Activated CD8-positive, alpha-beta T cell treated with anti-CD3 and anti-CD28 coated beads, Interleukin-2, amount 10 ng/mL, durations not matched to agents 7 days and 5 days (primary cell): ENCODE measurements at regions of chr20 and their contacts with region 1.

Region 1: GRCh38 chr20:16821211-16822089 is 73.3 kb downstream of the OTOR start:
- DNase-seq: peak; percentile 47
- ATAC-seq: no peak
- H3K4me3 Mint-ChIP-seq: no peak overlapping the region
- H3K27ac Mint-ChIP-seq: no peak overlapping the region
- H3K4me1 Mint-ChIP-seq: no peaks in the 10 kb centered on the region
- H3K27me3 Mint-ChIP-seq: peaks cover 12% of the 10 kb centered on the region

Region 2: GRCh38 chr20:16407251-16408067 is 414.0 kb before region 1 on chr20:
- CTCF ChIA-PET with region 1: no interaction called
- POLR2A ChIA-PET with region 1: no interaction called
- DNase-seq: no peak
- ATAC-seq: no peak
- H3K4me3 Mint-ChIP-seq: no peak overlapping the region
- H3K27ac Mint-ChIP-seq: no peak overlapping the region
- H3K4me1 Mint-ChIP-seq: no peaks in the 10 kb centered on the region
- H3K27me3 Mint-ChIP-seq: no peaks in the 10 kb centered on the region

Region 3: DNA sequence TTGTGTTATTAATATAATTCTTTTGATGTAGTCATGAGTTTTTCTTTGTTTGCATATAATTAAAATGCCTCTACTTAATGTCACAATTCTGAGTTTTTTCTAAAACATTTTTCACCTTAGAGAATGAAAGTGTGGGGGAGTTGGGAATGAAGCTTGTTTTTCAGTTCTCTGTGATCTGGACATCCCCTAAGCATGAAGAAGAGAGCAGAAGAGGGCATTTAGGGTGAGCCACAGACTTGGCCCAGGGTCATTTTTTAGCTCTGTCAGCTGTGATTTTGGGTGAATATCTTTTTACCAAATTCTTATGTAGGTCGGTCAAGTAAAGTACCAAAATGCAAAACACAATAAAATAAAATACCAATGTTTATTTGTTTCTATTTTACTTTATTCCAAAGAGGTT is 69.4 kb before region 1 on chr20:
- CTCF ChIA-PET with region 1: no interaction called
- POLR2A ChIA-PET with region 1: no interaction called
- DNase-seq: no peak
- ATAC-seq: no peak
- H3K4me3 Mint-ChIP-seq: no peak overlapping the region
- H3K27ac Mint-ChIP-seq: no peak overlapping the region
- H3K4me1 Mint-ChIP-seq: no peaks in the 10 kb centered on the region
- H3K27me3 Mint-ChIP-seq: peaks cover 6% of the 10 kb centered on the region

Region 4: DNA sequence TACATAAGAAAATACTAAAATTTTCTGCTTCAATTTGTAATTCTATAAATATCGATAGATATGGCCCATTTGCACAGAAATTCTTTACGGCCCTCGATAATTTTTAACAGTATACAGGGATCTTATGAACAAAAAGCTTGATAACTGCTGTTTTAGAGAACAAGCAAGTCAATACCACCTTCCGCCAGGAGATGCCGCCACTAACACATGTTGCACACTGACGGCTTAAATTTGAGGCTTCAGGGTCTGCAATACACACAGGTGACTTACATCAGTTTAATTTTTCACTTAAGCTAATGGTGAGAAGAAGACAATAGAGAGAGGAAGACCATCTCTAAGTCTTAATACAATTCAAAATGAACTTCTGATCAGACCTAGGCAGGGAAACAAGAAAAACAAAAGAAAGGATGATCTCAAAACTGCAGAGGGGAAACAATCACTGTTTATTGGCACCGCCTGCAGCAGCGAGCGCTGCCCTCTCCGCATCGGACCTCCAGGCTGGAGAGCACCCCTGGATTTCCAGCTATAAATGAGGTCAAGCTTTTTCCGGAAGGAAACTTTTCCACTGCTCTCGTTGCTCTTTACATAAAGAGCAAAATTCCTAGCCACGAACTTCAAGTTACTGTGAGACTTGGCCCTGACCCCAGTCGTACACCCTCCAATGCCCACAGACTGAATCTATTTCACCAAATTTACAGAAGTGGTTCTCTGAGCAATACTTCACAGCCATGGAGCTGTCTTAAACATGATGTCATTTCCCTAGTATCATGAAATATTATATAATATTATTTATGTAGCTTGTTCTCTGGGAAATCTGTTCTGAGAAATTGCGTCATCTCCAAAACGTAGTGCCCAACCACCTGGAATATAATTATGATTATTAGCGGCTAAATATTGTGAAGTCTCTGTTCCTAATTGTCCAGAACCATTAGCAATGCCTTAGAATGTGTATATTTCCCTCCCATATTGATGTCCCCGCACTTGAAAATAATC is 19.2 kb before region 1 on chr20:
- CTCF ChIA-PET with region 1: interaction called, 35 read pairs
- POLR2A ChIA-PET with region 1: no interaction called
- DNase-seq: peak; percentile 71
- ATAC-seq: peak; percentile 44
- H3K4me3 Mint-ChIP-seq: no peak overlapping the region
- H3K27ac Mint-ChIP-seq: no peak overlapping the region
- H3K4me1 Mint-ChIP-seq: no peaks in the 10 kb centered on the region
- H3K27me3 Mint-ChIP-seq: peaks cover 13% of the 10 kb centered on the region

Region 5: DNA sequence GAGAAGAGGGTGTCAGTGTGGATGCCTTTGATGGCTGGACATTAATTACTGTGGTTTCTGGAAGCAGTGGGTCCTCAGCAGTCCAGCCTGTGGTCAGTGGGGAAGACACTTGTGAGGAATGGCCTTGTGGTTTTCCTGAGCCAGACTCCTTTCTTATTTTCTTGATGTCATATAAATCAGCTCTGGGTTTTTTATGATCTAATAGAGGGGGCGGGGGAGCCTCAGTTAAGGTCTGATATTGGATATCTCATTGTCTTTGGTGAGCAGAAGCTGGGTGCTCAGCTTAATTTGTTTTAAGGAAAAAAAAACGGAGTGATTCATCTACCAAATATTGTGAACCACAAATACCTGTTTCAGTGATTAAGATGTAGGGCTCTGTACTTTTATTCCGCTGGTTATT is 11.2 kb before region 1 on chr20:
- CTCF ChIA-PET with region 1: interaction called, 43 read pairs
- POLR2A ChIA-PET with region 1: no interaction called
- DNase-seq: no peak
- ATAC-seq: no peak
- H3K4me3 Mint-ChIP-seq: no peak overlapping the region
- H3K27ac Mint-ChIP-seq: no peak overlapping the region
- H3K4me1 Mint-ChIP-seq: no peaks in the 10 kb centered on the region
- H3K27me3 Mint-ChIP-seq: peaks cover 10% of the 10 kb centered on the region

Region 6: GRCh38 chr20:16846006-16846405 is 24.6 kb after region 1 on chr20:
- CTCF ChIA-PET with region 1: interaction called, 13 read pairs
- POLR2A ChIA-PET with region 1: no interaction called
- DNase-seq: no peak
- ATAC-seq: no peak
- H3K4me3 Mint-ChIP-seq: no peak overlapping the region
- H3K27ac Mint-ChIP-seq: no peak overlapping the region
- H3K4me1 Mint-ChIP-seq: no peaks in the 10 kb centered on the region
- H3K27me3 Mint-ChIP-seq: no peaks in the 10 kb centered on the region